Right ventricle myocardium inferior (tissue), 1 donor: ENCODE measurements at regions of chr6 and their contacts with region 1.

Region 1: DNA sequence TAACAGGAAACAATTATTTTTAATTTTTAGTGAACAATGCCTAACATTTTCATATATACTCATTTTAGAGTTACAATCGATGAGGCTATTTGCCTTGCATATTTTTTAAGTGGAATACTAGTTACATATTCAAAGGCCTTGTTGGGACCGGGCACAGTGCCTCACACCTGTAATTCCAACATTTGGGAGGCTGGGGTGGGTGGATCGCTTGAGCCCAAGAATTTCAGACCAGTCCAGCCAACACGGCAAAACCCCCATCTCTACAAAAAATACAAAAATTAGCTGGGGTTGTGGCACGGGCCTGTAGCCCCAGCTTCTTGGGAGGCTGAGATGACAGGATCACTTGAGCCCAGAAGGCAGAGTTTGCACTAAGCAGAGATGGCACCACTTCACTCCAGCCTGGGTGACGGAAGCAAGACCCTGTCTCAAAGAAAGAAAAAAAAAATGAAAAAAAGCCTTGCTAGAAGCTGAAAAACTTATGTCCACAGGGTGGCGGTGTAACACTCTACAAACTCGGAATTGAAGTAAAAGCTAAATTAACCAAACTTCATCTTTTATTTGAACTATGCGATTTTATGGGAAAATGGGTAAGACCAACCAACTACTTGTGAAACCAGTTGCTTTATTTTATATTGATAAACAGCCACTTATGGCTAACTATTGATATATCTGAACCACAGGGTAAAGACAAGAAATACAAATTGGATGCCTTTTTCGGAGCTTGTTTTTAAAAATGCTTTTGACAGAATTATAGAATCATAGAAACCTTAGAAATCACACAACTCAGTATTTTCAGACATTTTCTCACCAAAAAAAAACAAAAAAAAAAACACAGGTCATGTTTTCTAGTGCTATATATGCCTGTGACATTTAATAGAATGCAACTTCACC is 24.1 kb upstream of the ROS1 start:
- DNase-seq: no peak
- ATAC-seq: no peak

Region 2: GRCh38 chr6:117555882-117556498 is 106.2 kb after region 1 on chr6:
- intact Hi-C with region 1: loop called (anchors 2 kb)
- DNase-seq: no peak
- ATAC-seq: no peak

Region 3: GRCh38 chr6:118918326-118918725 is 1468.5 kb after region 1 on chr6:
- intact Hi-C with region 1: no loop called
- DNase-seq: no peak
- ATAC-seq: no peak